Prostate gland (tissue), 2 donors: ENCODE measurements at regions of chr7 and their contacts with region 1.

Region 1: DNA sequence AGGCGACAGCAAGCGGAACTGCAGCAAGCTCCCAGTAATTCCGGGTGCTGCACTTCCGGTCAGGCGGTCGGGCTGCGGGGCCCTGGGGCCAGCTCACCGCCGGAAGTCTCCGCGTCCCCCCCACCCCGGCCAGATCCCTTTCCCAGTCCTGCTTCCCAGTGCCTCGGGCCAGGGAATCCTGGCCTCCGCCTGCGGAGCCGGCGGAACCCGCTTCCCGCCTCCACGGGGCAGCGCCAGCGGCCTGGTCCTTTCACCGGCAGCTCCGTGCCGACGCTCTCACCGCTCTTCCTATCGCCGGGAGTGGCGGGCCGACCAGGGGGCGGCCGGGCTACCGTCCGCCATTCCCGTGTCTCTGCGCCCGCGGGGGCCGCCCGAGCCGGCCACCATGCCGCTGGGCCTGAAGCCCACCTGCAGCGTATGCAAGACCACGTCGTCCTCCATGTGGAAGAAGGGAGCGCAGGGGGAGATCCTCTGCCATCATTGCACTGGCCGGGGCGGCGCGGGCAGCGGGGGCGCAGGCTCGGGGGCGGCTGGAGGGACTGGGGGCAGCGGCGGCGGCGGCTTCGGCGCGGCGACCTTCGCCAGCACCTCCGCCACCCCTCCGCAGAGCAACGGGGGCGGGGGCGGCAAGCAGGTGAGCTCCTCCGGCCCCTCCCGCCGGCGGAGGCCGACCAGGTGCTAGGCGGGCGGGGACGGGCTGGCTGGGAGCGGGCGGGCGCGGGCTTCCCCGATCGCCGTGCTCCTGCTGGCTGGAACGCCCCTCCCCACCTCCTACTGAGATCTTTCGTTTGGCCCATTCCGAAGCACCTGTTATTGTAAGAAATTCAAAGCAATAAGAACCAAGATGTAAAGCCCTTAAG is at the start of gene GATAD1:
- DNase-seq: peak; percentile 93
- H3K4me3 ChIP-seq: peak within 1 kb of the TSS; percentile 98 to 99
- H3K27ac ChIP-seq: peak within 1 kb of the TSS; percentile 97
- H3K4me1 ChIP-seq: no peaks in the 10 kb centered on the region
- H3K27me3 ChIP-seq: no peaks in the 10 kb centered on the region
- CTCF ChIP-seq: peak; percentile 86 to 98 (median 94)
- POLR2A ChIP-seq: peak; percentile 78
- total RNA-seq, gene GATAD1: 26.9 to 56.3 TPM

Region 2: GRCh38 chr7:90455163-90456030 is 1992.2 kb before region 1 on chr7:
- intact Hi-C with region 1: no loop called
- DNase-seq: peak; percentile 24
- H3K4me3 ChIP-seq: no peak overlapping the region
- H3K27ac ChIP-seq: no peak overlapping the region
- H3K4me1 ChIP-seq: no peaks in the 10 kb centered on the region
- H3K27me3 ChIP-seq: no peaks in the 10 kb centered on the region
- CTCF ChIP-seq: peak in 3 of 4 experiments; percentile 59 to 84 (median 72)
- POLR2A ChIP-seq: no peak

Region 3: DNA sequence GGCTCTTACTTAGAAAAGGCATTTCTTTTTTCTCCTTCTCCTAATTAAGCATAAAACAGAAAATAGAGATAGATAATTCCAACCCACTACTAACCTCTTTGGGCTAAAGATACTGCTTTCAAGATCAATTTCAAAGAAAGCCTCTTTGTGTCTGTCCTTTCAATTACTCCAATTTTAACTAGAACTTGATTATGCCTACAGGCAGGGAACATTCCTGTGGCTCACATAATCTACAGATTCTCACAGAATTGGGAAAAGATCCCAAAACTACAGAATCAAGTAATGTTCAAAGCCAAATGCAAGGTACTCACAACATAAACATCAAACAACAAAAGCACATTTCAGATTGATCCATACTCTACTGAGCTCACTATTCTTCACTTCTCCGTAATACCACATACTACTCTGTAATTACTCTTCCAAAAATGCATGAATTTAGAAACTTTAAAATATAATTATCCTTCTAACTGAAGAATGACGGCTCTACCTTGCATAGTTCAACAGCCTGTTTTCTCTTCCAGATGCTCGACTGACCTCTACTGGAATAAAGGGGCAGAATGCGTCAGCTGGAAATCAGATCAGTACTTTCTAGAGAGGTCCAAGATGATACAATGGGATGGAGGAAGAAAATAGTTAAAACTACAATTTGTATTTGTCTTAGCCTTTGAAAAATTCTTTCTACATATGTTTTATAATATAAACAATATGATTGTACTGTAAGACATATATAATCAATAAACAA is 571.0 kb before region 1 on chr7:
- intact Hi-C with region 1: loop called (anchors 5 kb)
- DNase-seq: no peak
- H3K4me3 ChIP-seq: no peak overlapping the region
- H3K27ac ChIP-seq: no peak overlapping the region
- H3K4me1 ChIP-seq: no peaks in the 10 kb centered on the region
- H3K27me3 ChIP-seq: no peaks in the 10 kb centered on the region
- CTCF ChIP-seq: peak in 2 of 4 experiments; percentile 33 to 38
- POLR2A ChIP-seq: no peak

Region 4: GRCh38 chr7:92134271-92135051 is 313.1 kb before region 1 on chr7 and contains the start of gene CYP51A1:
- intact Hi-C with region 1: loop called (anchors 2 kb)
- DNase-seq: peak; percentile 96
- H3K4me3 ChIP-seq: peak within 1 kb of the TSS; percentile 83 to 98
- H3K27ac ChIP-seq: peak within 1 kb of the TSS; percentile 97 to 99
- H3K4me1 ChIP-seq: peaks cover 6% of the 10 kb centered on the region
- H3K27me3 ChIP-seq: no peaks in the 10 kb centered on the region
- CTCF ChIP-seq: peak in 2 of 4 experiments; percentile 5 to 25
- POLR2A ChIP-seq: peak; percentile 91
- total RNA-seq, gene CYP51A1: 51.6 to 121 TPM

Region 5: DNA sequence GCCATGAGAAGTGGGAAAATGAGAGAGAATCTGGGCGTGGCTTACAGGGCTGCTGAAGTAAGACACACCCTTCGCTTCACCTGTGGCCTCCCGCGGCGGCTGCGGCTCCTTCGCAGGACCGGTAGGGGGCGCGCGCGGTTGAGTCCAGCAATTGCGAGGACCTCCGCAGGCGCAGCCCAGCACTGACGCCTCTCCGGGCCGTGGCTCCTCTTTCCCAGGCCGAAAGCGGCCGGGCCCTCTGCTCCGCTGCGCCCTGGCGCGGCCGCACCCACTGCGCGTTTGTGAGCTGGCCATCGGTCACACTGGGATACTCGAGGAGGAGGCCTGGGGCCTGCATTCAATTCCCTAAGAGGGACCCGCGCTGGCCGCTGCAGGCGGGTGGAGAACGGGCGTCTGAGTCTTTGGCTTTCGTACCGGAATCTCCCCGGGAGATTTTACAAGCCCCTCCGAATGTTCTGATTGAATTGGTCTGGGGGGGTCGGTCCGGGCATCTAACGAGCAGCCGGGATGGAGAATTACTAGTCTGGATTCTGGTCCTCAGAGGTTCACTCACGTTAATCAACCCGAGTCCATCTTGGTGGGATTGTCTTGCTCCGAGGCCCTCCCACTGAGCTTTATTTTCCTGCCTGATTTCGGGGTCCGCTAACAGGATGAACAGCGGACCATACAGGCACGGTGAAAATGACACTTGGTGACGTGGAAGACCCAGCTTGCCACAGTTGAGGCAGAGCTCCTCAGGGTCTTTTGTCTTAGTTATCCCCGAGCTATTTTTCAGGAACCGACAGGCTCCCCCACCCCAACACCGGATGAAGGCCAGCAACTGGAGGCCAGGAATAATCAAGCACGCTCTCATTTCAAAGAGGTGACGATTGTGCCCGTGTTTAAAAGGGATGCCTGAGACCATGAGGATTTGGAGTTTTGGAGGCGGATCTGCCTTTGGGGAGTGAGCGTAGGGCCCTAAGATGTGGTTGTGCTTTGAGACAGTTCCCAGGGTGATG is 268.3 kb before region 1 on chr7 and contains the start of gene LRRD1:
- intact Hi-C with region 1: loop called (anchors 2 kb)
- DNase-seq: peak; percentile 86
- H3K4me3 ChIP-seq: peak within 1 kb of the TSS; percentile 39 to 40
- H3K27ac ChIP-seq: peak within 1 kb of the TSS; percentile 75 to 88
- H3K4me1 ChIP-seq: no peaks in the 10 kb centered on the region
- H3K27me3 ChIP-seq: no peaks in the 10 kb centered on the region
- CTCF ChIP-seq: peak; percentile 93 to 97 (median 94)
- POLR2A ChIP-seq: peak; percentile 30
- total RNA-seq, gene LRRD1: 0.40 TPM in 1 of 2 donors, not detected in the other

Region 6: GRCh38 chr7:92230547-92230946 is 217.0 kb before region 1 on chr7:
- intact Hi-C with region 1: no loop called
- DNase-seq: no peak
- H3K4me3 ChIP-seq: no peak overlapping the region
- H3K27ac ChIP-seq: no peak overlapping the region
- H3K4me1 ChIP-seq: no peaks in the 10 kb centered on the region
- H3K27me3 ChIP-seq: no peaks in the 10 kb centered on the region
- CTCF ChIP-seq: no peak
- POLR2A ChIP-seq: no peak

Region 7: GRCh38 chr7:92245487-92246362 is 201.8 kb before region 1 on chr7 and contains the starts of genes ANKIB1 and KRIT1:
- intact Hi-C with region 1: loop called (anchors 5 kb)
- DNase-seq: peak; percentile 83
- H3K4me3 ChIP-seq: peak within 1 kb of the TSS; percentile 90
- H3K27ac ChIP-seq: peak within 1 kb of the TSS; percentile 85 to 92
- H3K4me1 ChIP-seq: no peaks in the 10 kb centered on the region
- H3K27me3 ChIP-seq: no peaks in the 10 kb centered on the region
- CTCF ChIP-seq: peak in 2 of 4 experiments; percentile 30 to 39
- POLR2A ChIP-seq: peak; percentile 43
- total RNA-seq, gene ANKIB1: 20.1 to 47.9 TPM
- total RNA-seq, gene KRIT1: 53.4 to 98.4 TPM

Region 8: GRCh38 chr7:92567460-92567859 is 119.9 kb after region 1 on chr7:
- intact Hi-C with region 1: no loop called
- DNase-seq: no peak
- H3K4me3 ChIP-seq: no peak overlapping the region
- H3K27ac ChIP-seq: no peak overlapping the region
- H3K4me1 ChIP-seq: no peaks in the 10 kb centered on the region
- H3K27me3 ChIP-seq: no peaks in the 10 kb centered on the region
- CTCF ChIP-seq: no peak
- POLR2A ChIP-seq: no peak